ENCODE measurements at regions of chr1 and their contacts with region 1.

Region 1: GRCh38 chr1:31505911-31506497 is 70.3 kb upstream of the TINAGL1 start:
- DNase-seq: no peak
- H3K4me3 ChIP-seq: no peak overlapping the region
- H3K27ac ChIP-seq: no peak overlapping the region
- H3K4me1 ChIP-seq: peaks cover 4 to 16% (median 13%) of the 10 kb centered on the region in 4 experiments
- H3K27me3 ChIP-seq: no peaks in the 10 kb centered on the region
- CTCF ChIP-seq: no peak
- EP300 ChIP-seq: no peak
- POLR2A ChIP-seq: no peak
- RAD21 ChIP-seq: no peak

Region 2: GRCh38 chr1:31460027-31460426 is 46.0 kb before region 1 on chr1:
- CTCF ChIA-PET with region 1: interaction called, 16 read pairs
- POLR2A ChIA-PET with region 1: no interaction called
- DNase-seq: no peak
- H3K4me3 ChIP-seq: no peak overlapping the region
- H3K27ac ChIP-seq: no peak overlapping the region
- H3K4me1 ChIP-seq: peaks cover 0 to 5% (median 0%) of the 10 kb centered on the region in 4 experiments; a peak in 2 of 7 replicates
- H3K27me3 ChIP-seq: no peaks in the 10 kb centered on the region; a peak in 1 of 7 replicates
- CTCF ChIP-seq: peak in 2 of 3 experiments; percentile 43 to 51; a peak in 2 of 4 replicates
- EP300 ChIP-seq: no peak
- POLR2A ChIP-seq: no peak
- RAD21 ChIP-seq: peak; percentile 66 to 73

Region 3: DNA sequence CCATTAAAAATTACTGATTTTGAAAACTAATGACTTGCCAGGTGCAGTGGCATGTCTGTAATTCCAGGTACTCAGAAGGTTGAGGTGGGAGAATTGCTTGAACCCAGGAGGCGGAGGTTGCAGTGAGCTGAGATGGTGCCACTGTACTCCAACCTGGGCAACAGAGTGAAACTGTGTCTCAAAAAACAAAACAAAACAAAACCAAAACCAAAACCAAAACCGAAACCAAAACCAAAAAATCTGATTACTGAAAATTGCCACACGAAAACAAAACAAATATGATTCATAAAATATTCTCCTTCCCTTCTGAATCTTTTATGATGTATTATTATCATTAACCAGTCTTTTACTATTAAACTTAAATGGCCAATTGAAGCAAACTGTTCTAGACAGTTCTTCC is 18.9 kb before region 1 on chr1:
- CTCF ChIA-PET with region 1: interaction called, 16 read pairs
- POLR2A ChIA-PET with region 1: no interaction called
- DNase-seq: no peak
- H3K4me3 ChIP-seq: no peak overlapping the region
- H3K27ac ChIP-seq: no peak overlapping the region
- H3K4me1 ChIP-seq: peaks cover 0 to 12% (median 2%) of the 10 kb centered on the region in 4 experiments; a peak in 6 of 7 replicates
- H3K27me3 ChIP-seq: no peaks in the 10 kb centered on the region
- CTCF ChIP-seq: no peak
- EP300 ChIP-seq: no peak
- POLR2A ChIP-seq: no peak
- RAD21 ChIP-seq: no peak

Region 4: DNA sequence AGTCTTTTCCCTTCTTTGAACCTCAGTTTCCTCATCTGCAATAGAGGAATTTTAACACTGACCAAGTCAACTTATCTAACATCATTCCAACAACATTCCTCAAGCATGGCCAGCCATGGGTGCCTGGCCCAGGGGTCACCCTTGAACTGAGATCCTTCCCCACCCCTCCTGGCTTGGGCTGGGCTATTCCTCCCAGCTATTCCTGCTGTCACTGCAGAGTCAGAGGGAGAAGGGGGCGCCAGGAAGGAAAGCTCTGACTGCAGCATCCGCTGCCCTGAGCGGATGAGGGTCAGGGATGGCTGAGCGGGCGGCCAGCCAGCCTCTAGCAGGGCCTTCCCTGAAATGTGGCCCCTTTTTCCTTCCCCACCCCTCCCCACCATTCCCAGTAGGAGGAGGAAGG is 73.4 kb after region 1 on chr1:
- CTCF ChIA-PET with region 1: no interaction called
- POLR2A ChIA-PET with region 1: no interaction called
- DNase-seq: peak in 1 of 2 experiments; percentile 49
- H3K4me3 ChIP-seq: peak overlapping the region in 1 of 4 experiments; percentile 26; a peak in 1 of 8 replicates
- H3K27ac ChIP-seq: no peak overlapping the region
- H3K4me1 ChIP-seq: peaks cover 10 to 55% (median 32%) of the 10 kb centered on the region in 4 experiments
- H3K27me3 ChIP-seq: peaks cover 0 to 2% (median 0%) of the 10 kb centered on the region in 4 experiments; a peak in 1 of 7 replicates
- CTCF ChIP-seq: no peak
- EP300 ChIP-seq: no peak
- POLR2A ChIP-seq: no peak
- RAD21 ChIP-seq: no peak

Measured in H1 (cell line).